ENCODE measurements at regions of chr5 and their contacts with region 1.

Region 1: DNA sequence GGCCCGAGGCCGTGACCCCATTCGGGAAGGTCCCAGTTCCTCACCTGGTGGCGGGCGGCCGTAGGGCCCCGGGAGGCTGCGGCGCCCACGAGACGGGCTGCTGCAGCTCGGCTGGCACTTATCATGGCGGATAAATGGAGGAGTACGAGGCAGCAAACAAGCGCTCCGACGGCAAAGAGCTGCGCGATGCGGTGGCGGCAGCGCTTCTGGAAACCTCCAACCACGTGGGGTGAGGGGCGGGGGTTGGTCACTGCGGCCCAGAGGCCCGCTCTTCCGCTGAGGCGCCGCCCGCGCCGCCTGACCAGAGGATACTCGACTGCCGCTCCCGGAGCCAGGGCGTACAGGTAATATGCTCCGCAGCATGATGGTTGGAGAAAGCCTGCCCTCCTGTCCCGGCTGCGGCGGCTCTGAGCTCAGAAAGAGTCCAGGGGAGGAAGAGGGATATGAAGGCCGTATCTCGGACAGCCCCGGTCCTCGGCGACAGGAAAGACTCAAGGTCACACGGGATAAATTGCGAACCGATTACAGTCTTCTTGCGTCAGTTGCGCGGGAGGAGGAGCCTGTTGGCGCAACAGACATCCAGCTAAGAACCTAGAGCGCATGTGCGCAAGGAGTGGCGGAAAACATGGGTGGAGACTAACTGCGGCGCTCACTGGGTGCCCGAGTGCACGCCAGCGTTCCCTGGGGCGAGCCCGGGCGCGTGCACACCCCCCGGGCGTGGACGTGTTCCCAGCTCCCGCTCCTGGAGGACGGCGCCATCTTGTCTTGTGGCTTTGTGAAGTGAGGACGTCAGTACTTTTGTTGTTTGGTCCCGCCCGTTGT is at the start of gene HSPA9:
- DNase-seq: peak; percentile 95 to 100
- ATAC-seq: peak; percentile 79 to 92 (median 85)
- H3K4me3 ChIP-seq: peak within 1 kb of the TSS; percentile 86
- H3K4me3 Mint-ChIP-seq: peak within 1 kb of the TSS; percentile 98
- H3K27ac ChIP-seq: peak within 1 kb of the TSS; percentile 98
- H3K27ac Mint-ChIP-seq: peak within 1 kb of the TSS; percentile 100
- H3K4me1 ChIP-seq: peaks cover 18% of the 10 kb centered on the region
- H3K4me1 Mint-ChIP-seq: peaks cover 21 to 33% of the 10 kb centered on the region in 2 donors
- H3K27me3 ChIP-seq: no peaks in the 10 kb centered on the region
- H3K27me3 Mint-ChIP-seq: no peaks in the 10 kb centered on the region
- CTCF ChIP-seq: no peak
- total RNA-seq, gene HSPA9: 272 to 308 (median 308) TPM

Region 2: DNA sequence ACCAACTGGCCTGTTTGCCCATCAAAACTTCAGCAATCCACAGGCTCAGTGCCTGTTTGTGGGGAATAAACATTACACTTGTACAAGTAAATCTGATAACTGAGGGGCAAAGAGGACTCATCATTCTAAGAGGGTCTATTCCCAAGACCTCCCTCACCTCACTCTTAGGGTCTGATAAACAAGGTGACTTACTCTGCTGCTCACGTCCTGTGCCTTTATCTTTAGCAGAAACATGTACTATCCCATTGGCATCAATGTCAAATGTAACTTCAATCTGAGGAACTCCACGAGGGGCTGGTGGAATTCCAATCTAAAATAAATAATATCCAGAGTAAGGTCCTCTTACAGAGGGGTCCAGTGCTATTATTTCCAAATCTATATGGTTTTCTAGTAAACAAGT is 17.7 kb before region 1 on chr5:
- intact Hi-C with region 1: no loop called
- DNase-seq: no peak
- ATAC-seq: no peak
- H3K4me3 ChIP-seq: no peak overlapping the region
- H3K4me3 Mint-ChIP-seq: no peak overlapping the region
- H3K27ac ChIP-seq: no peak overlapping the region
- H3K27ac Mint-ChIP-seq: peak overlapping the region; percentile 45 to 61
- H3K4me1 ChIP-seq: peaks cover 3% of the 10 kb centered on the region
- H3K4me1 Mint-ChIP-seq: peaks cover 31 to 43% of the 10 kb centered on the region in 2 donors
- H3K27me3 ChIP-seq: no peaks in the 10 kb centered on the region
- H3K27me3 Mint-ChIP-seq: no peaks in the 10 kb centered on the region
- CTCF ChIP-seq: no peak

Region 3: DNA sequence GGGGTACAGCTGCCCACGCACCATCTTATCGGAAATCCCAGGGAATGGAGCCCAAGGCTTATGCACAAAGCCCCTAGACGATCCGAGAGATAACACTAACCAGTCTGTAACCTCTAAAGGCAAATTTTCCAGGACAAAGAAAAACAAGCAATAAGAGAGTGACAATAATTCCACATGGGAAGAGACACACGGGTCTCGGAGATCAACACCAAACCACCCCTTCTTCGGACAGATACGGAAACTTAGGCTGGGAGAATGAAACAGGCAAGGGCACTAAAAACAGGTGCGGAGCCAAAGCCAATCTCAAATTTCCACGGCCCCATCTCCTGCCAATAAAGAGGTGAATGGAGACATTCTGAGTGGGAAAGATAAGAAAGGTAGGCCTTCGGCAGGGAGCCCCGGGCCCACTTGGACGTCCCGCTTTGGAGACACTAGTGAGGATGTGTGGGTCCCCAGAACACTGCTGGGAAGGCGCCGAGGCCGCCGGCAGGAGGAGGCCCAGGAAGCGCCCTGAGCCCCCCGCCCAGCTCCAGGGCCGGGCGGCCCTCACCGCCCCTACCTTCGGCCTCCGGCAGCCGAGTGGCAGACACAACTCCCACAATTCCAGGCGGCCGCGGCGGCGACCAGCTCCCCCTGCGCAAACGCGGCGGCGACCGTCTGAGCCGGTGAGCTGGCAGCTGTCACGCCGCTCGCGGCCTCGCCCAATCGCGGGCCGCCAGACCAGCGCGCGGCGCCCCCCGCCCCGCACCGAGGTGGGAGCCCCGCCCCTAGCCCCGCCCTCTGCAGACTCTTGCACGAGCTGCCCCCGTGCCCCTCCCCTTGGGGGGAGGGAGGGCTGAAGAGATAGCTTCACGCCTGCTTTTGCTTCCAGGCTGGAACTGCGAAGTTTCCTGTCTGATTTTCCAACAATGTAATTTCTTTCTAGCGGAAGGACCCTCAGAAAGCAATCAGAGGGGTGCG is 622.6 kb after region 1 on chr5 and contains the start of gene SIL1:
- intact Hi-C with region 1: loop called (anchors 10 kb)
- DNase-seq: peak; percentile 91 to 97
- ATAC-seq: peak; percentile 98 to 99 (median 98)
- H3K4me3 ChIP-seq: peak within 1 kb of the TSS; percentile 70
- H3K4me3 Mint-ChIP-seq: peak within 1 kb of the TSS; percentile 90
- H3K27ac ChIP-seq: peak within 1 kb of the TSS; percentile 85
- H3K27ac Mint-ChIP-seq: peak within 1 kb of the TSS; percentile 92 to 93
- H3K4me1 ChIP-seq: peaks cover 18% of the 10 kb centered on the region
- H3K4me1 Mint-ChIP-seq: peaks cover 21 to 23% of the 10 kb centered on the region in 2 donors
- H3K27me3 ChIP-seq: no peaks in the 10 kb centered on the region
- H3K27me3 Mint-ChIP-seq: no peaks in the 10 kb centered on the region
- CTCF ChIP-seq: no peak
- total RNA-seq, gene SIL1: 16.9 to 22.5 (median 22.4) TPM

Measured in natural killer cell (primary cell).